Motor neuron (in vitro differentiated cells): ENCODE measurements at regions of chr12 and their contacts with region 1.

Region 1: DNA sequence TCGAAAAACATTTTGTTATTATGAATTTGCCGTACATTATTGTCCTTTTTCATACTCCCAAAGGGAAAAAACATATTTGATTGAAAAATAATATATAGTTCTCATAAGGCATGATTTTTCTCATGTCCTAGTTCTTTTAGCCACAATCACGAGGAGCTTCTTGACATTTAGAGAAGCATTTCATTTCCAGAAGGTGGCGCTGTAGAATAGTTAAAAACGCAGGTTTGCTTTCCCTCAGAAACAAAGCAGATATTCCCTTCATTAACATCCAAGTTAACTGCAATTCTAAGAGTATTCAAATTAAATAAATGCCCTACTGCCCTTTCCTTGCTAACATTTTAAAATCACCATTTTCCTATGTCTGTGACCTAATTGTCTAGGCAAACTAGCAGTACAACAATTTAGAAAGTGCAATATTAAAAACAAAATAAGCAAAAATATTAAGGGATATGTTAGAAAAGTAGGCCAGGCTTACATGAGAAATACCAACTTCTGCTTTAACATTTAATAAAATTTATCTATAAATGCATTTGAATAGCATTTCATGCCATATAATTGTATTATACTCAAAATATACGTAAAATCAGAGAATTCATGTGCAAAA is 10.9 kb upstream of the PIK3C2G start:
- ATAC-seq: peak in 7 of 8 experiments; percentile 35 to 79 (median 57)
- H3K4me3 ChIP-seq: no peak overlapping the region
- H3K27ac ChIP-seq: no peak overlapping the region
- H3K4me1 ChIP-seq: peaks cover 0 to 6% of the 10 kb centered on the region in 2 donors

Region 2: DNA sequence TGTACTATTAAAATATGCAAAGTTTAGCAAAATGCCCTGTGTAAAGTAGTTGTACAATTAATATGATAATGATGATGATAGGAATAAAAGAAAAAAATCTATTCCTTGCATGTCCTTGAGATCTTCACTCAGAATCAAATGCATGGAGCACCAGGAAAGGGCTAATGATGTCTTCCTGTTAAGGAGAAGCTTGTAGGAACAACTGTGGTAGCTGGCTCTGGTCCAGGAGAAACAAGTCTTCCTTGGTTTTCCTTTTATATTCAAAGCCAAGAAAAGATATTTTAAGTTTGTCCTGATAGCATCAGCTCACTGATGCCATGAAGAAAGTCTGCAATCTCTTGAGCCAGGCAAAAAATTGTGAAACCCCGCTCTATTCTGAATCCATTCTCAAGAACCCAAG is 149.8 kb after region 1 on chr12:
- in situ Hi-C with region 1: loop called in 1 of 9 experiments (anchors 25 kb)
- ATAC-seq: no peak
- H3K4me3 ChIP-seq: no peak overlapping the region
- H3K27ac ChIP-seq: no peak overlapping the region
- H3K4me1 ChIP-seq: no peaks in the 10 kb centered on the region